ENCODE measurements at regions of chr2 and their contacts with region 1.

Region 1: GRCh38 chr2:199922856-199923255 is 11.8 kb downstream of the C2orf69 start:
- DNase-seq: peak in 2 of 4 experiments; percentile 26 to 52
- ATAC-seq: peak; percentile 97
- H3K4me3 ChIP-seq: no peak overlapping the region
- H3K27ac ChIP-seq: peak overlapping the region; percentile 65; the same call in 2 of the 3 replicates
- H3K4me1 ChIP-seq: no peaks in the 10 kb centered on the region; a peak in 1 of 5 replicates
- H3K27me3 ChIP-seq: no peaks in the 10 kb centered on the region
- CTCF ChIP-seq: no peak
- EP300 ChIP-seq: no peak
- POLR2A ChIP-seq: no peak
- RAD21 ChIP-seq: no peak

Region 2: DNA sequence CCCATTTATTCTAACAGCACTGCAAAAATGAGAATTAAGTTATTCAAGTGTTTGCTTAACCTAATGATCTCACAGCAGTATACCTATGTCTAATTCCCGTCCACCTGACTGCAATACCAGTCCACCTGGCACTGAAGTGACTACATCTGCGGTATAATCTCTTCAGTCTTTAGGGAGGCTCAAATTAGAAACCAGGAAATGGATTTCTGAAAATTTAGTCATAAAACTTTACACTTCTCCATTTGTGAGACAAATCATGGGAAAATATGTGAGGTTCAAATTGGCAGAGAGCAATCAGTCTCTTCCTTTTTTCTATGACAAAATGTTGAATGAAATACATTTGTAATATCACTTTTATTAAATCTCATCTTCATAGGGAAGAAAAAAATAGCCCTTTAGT is 104.8 kb before region 1 on chr2:
- CTCF ChIA-PET with region 1: no interaction called
- POLR2A ChIA-PET with region 1: no interaction called
- in situ Hi-C with region 1: no loop called
- intact Hi-C with region 1: no loop called
- DNase-seq: no peak
- ATAC-seq: no peak
- H3K4me3 ChIP-seq: no peak overlapping the region
- H3K27ac ChIP-seq: no peak overlapping the region
- H3K4me1 ChIP-seq: no peaks in the 10 kb centered on the region
- H3K27me3 ChIP-seq: peaks cover 0 to 4% of the 10 kb centered on the region in 2 experiments; a peak in 1 of 5 replicates
- CTCF ChIP-seq: no peak
- EP300 ChIP-seq: no peak
- POLR2A ChIP-seq: no peak
- RAD21 ChIP-seq: no peak

Region 3: DNA sequence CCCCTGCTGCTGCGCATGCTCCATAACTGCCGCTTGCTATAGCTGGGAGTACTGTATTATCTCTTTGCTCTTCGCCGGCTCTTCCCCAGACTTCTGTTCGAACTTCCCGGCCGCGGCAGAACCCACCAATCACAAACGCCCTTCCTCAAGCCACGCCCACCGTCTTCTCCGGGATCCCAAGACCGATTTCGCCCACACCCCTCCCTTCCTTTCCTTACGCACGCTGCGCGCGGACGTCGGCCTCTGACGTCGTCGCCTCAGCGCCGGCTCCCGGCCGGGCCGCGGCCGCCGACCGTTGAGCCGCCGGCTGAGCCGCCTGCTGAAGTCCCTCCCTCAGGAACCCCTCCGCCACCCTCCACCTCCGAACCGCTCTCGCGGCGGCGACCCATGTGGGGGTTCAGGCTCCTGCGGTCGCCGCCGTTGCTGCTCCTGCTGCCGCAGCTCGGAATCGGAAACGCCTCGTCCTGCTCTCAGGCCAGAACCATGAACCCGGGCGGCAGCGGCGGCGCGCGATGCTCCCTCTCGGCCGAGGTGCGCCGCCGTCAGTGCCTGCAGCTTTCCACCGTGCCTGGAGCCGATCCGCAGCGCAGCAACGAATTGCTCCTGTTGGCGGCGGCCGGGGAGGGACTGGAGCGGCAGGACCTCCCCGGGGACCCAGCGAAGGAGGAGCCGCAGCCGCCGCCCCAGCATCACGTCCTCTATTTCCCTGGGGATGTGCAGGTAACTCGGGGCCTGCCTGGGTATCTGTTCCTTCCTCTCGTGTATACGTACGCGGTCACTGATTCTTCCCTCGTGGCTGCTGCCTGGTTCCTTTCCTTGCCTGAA is 11.6 kb before region 1 on chr2 and contains the start of gene C2orf69:
- CTCF ChIA-PET with region 1: no interaction called
- POLR2A ChIA-PET with region 1: interaction called, 10 read pairs
- in situ Hi-C with region 1: no loop called
- intact Hi-C with region 1: no loop called
- DNase-seq: peak; percentile 87 to 97 (median 91)
- ATAC-seq: peak; percentile 93
- H3K4me3 ChIP-seq: peak within 1 kb of the TSS; percentile 90
- H3K27ac ChIP-seq: peak within 1 kb of the TSS; percentile 95
- H3K4me1 ChIP-seq: peaks cover 3 to 10% of the 10 kb centered on the region in 2 experiments; a peak in 3 of 5 replicates
- H3K27me3 ChIP-seq: no peaks in the 10 kb centered on the region
- CTCF ChIP-seq: no peak
- EP300 ChIP-seq: peak; percentile 18; the same call in 1 of the 2 replicates
- POLR2A ChIP-seq: peak; percentile 89
- RAD21 ChIP-seq: no peak
- polyA plus RNA-seq, gene C2orf69: 3.4 to 4.3 TPM